Head of caudate nucleus (tissue), 42 donors: ENCODE measurements at regions of chr2 and their contacts with region 1.

Region 1: DNA sequence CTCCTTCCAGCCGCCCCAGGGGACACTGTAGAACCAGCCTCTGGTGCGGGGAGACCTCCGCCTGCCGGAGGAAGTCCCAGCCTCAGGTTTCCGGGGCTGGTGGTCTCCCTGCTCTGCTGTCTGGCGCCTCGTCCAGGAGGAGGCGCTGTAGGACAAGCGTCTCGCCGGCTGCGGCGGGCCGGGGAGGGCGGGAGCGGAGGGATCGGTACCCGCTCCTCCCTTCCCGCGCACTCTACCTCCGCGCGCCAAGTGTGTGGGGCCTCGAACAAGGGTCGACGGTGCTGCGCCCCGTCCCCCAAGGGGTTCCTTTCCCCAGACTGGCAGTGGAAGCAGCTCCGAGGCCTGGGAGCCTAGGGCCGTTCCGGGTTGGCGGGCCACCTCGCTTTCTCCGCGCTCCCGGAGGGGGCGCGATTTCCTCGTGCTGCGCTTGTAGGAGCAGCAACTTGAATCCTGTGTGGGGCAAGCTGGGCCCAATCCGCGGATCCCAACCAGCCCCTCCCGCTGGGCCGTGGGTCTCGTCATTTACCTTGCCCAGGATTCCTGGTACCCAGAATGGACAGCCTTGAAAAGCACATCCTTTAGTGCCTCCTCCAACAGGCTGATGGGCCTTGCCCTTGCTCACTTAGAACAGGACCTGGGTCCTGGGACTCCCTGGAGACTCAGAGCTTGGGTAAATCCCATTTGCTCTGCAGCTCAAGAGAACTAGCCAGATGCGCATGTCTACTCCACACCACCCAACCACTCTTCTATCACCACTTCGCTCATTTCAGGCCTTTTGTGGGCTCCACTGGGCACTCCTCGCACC is 10.6 kb upstream of the HOXD4 start:
- DNase-seq: peak; percentile 22 to 85 (median 68)

Region 2: DNA sequence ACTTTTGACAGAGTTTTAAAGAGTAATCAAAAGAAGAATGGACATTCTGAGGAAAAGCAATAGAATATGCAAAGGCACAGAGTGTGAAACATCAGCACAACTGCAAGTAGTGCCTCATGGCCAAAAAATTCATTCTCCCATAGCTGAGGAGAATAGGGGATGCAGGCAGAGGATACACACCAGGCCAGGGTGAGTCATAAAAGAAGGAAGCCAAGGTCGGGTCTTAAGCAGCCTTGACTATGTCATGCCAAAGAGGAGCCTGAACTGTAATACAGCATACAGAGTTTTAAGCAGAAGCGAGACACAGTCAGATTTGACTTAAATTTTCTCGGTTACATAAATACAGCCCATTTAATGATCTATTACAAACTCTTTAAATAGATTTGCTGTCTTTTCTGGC is 303.7 kb before region 1 on chr2:
- intact Hi-C with region 1: no loop called
- DNase-seq: no peak

Region 3: DNA sequence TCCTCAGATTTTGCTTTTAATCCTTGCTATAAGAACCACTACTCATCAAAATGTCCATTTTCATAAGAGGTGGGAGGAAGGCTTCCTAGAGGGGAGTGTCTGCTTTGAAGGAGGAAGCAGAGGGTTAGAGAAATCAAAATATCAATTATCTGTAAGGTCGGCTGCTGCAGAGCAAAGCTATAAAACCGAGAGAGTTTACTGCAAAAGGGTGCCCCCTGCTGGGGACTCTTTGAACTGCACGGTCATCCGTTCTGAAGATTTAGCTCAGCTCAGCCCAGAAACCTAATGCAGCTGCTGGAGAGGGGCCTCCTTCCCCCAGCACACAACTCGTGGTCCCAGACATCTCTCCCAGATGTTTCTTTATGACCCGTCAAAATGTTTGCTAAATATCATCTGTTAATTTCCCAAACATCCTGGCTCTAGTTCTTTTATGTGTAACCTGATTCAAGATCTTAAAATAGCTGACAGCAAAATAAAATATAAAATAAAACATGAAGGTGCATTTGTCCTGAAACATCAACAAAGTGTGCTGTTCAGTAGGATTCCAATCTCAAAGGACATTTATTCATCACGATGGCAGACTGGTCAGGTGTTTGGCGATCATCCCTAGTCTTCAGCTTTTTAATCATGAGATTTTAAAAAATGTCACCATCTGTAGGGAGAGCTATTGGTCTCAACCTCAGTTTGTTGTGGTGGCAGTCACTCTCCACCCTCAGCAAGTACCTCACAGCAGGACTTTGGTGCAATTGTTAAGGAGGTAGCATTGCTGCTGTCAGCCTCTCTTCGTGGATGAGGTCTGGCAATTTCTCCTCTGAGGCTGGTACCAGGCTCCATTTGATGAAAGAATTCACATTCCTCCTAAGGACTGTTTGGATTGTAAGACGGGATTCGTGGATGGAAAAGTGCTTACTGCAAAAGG is 314.4 kb after region 1 on chr2:
- intact Hi-C with region 1: loop called (anchors 5 kb)
- DNase-seq: peak; percentile 48 to 98 (median 92)

Region 4: DNA sequence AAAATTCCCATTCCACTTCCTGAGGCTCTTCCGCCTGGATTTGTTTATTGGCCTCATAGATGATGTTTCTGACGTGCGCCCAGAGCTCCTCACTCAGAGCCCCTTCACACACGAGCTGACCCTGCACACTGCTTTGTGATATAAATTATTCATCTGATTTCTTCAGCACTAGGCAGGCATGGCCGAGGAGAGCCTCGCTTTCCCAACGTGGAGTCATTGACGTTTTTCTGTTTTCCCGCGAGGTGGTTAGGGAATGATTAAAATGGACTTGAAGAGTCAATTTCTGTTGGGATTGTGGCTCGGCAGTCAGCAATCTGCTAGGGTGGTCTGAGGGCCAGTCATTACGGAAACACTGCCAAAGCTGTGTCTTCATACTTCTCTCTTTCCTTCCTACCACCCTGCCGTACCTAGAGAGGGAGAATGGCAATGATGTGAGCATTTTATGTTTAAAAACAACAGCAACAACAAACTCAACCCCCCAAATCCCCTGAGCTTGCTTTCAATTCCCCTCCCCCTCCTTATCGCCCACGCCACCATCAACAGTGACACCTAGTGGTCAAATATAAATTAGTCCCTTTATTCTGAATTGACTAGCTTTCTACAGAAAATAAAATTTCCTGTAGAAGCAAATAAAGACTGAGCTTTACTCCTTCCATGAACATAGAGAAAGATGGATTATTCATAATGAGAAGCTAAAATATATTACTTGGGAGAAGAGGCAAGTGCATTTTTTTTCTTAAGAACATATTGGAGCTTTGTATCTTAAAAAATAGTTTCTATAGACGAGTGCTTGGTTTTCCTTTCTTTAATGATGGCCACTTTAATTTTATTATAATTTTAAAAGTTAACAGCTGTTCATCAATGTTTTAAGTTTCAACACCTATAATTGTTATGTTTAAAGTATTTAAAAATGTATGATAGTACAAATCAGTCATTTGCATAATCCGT is 413.7 kb after region 1 on chr2:
- intact Hi-C with region 1: loop called (anchors 5 kb)
- DNase-seq: peak in 28 of 42 donors; percentile 9 to 70 (median 34)

Region 5: DNA sequence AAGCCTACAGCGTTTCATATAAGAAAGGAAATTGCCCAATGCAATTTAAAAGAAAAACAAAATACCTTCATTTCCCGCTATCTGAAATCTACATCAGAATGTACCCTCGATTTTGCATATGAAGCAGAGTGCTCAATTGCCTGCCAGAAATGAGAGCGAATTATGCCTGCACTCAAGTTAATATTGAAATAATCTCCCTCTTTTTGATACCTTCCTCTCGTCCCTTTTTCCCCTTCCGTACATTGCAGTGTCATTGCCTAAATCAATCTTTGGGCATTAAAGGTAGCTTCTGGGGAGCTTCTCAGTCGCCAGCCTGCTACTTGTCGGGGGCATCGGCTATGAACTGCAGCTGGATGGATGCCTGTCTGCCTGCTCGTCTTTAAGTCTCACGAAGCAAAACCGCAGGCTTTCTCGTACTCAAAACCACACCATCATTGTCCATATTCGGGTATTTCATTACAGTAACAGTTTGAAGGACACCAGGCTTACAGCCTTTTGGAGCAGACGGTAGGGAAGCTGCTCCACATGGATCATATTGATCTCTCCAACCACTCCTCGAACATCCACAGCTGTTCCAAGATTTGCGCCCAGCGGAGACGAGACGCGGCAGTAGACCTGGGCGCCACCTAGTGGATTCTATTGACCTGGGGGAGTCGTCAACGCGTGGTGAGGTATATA is 1007.9 kb after region 1 on chr2:
- intact Hi-C with region 1: loop called (anchors 10 kb)
- DNase-seq: peak; percentile 56 to 92 (median 81)